ENCODE measurements at regions of chr5 and their contacts with region 1.

Region 1: GRCh38 chr5:169805527-169805934 is 168.5 kb downstream of the DOCK2 start:
- DNase-seq: peak; percentile 94
- ATAC-seq: peak; percentile 90
- H3K4me3 ChIP-seq: peak overlapping the region; percentile 26; the same call in 1 of the 2 replicates
- H3K27ac ChIP-seq: peak overlapping the region; percentile 84
- H3K4me1 ChIP-seq: peaks cover 46% of the 10 kb centered on the region
- H3K27me3 ChIP-seq: no peaks in the 10 kb centered on the region
- CTCF ChIP-seq: no peak
- EP300 ChIP-seq: peak; percentile 87 to 90
- POLR2A ChIP-seq: peak; percentile 72
- RAD21 ChIP-seq: peak; percentile 29; the same call in 1 of the 2 replicates

Region 2: DNA sequence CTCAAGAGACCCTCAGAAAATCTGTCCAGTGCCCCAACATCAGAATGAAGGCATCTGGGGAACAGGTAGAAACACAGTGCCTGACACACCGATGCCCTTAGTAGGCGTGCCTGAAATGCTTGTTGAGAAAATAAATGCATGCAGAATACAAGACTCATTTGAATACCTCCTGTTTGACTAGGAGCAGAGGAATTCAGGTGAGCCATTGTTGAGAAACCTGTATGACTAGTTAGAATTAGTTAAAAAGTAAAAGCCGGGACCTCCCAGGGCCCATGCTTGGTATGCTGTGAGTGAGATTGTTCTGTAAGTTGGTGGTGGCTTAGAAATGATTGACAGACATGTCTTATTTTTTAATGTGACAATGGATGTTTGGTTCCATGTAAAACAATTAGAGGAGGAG is 1459.1 kb before region 1 on chr5:
- CTCF ChIA-PET with region 1: no interaction called
- POLR2A ChIA-PET with region 1: no interaction called
- RAD21 ChIA-PET with region 1: no interaction called
- SMC1A ChIA-PET with region 1: no interaction called
- in situ Hi-C with region 1: no loop called
- intact Hi-C with region 1: no loop called
- DNase-seq: no peak
- ATAC-seq: no peak
- H3K4me3 ChIP-seq: no peak overlapping the region
- H3K27ac ChIP-seq: no peak overlapping the region
- H3K4me1 ChIP-seq: peaks cover 5% of the 10 kb centered on the region
- H3K27me3 ChIP-seq: no peaks in the 10 kb centered on the region
- CTCF ChIP-seq: no peak
- EP300 ChIP-seq: no peak
- POLR2A ChIP-seq: no peak
- RAD21 ChIP-seq: no peak

Region 3: DNA sequence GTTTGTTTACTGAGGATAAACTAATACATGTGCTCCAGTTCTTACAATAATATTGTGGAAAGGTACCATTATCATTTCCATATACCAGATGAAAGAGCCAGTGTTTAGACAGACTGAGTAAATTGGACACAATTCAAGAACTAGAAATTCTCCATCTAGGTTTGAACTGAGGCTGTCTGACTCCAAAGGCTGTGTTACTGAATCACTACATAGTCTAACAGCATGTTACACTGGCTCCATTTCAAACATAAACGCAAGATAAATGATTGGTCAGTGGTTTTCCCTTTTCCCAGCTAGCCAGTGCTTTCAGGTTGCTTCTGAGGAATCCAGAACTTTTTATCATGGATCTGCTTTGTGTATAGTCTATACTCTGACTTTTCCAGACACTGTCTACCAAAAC is 213.9 kb before region 1 on chr5:
- CTCF ChIA-PET with region 1: no interaction called
- POLR2A ChIA-PET with region 1: no interaction called
- RAD21 ChIA-PET with region 1: no interaction called
- SMC1A ChIA-PET with region 1: no interaction called
- in situ Hi-C with region 1: no loop called
- intact Hi-C with region 1: no loop called
- DNase-seq: no peak
- ATAC-seq: no peak
- H3K4me3 ChIP-seq: no peak overlapping the region
- H3K27ac ChIP-seq: no peak overlapping the region
- H3K4me1 ChIP-seq: no peaks in the 10 kb centered on the region
- H3K27me3 ChIP-seq: no peaks in the 10 kb centered on the region
- CTCF ChIP-seq: no peak
- EP300 ChIP-seq: no peak
- POLR2A ChIP-seq: no peak
- RAD21 ChIP-seq: no peak

Region 4: GRCh38 chr5:169701910-169702451 is 103.5 kb before region 1 on chr5:
- CTCF ChIA-PET with region 1: interaction called, 31 read pairs
- POLR2A ChIA-PET with region 1: interaction called, 6 read pairs
- RAD21 ChIA-PET with region 1: interaction called, 78 read pairs
- SMC1A ChIA-PET with region 1: interaction called, 104 read pairs
- in situ Hi-C with region 1: no loop called
- intact Hi-C with region 1: loop called (anchors 1 kb)
- DNase-seq: no peak
- ATAC-seq: no peak
- H3K4me3 ChIP-seq: no peak overlapping the region
- H3K27ac ChIP-seq: peak overlapping the region; percentile 89
- H3K4me1 ChIP-seq: peaks cover 51% of the 10 kb centered on the region
- H3K27me3 ChIP-seq: no peaks in the 10 kb centered on the region
- CTCF ChIP-seq: peak; percentile 30 to 50 (median 39); a peak in 4 of 6 replicates
- EP300 ChIP-seq: no peak
- POLR2A ChIP-seq: no peak
- RAD21 ChIP-seq: peak; percentile 54

Region 5: GRCh38 chr5:169742771-169743296 is 62.7 kb before region 1 on chr5:
- CTCF ChIA-PET with region 1: interaction called, 3 read pairs
- POLR2A ChIA-PET with region 1: interaction called, 4 read pairs
- RAD21 ChIA-PET with region 1: interaction called, 42 read pairs
- SMC1A ChIA-PET with region 1: interaction called, 31 read pairs
- in situ Hi-C with region 1: no loop called
- intact Hi-C with region 1: loop called (anchors 1 kb)
- DNase-seq: no peak
- ATAC-seq: no peak
- H3K4me3 ChIP-seq: no peak overlapping the region
- H3K27ac ChIP-seq: no peak overlapping the region
- H3K4me1 ChIP-seq: peaks cover 9% of the 10 kb centered on the region
- H3K27me3 ChIP-seq: no peaks in the 10 kb centered on the region
- CTCF ChIP-seq: no peak
- EP300 ChIP-seq: no peak
- POLR2A ChIP-seq: no peak
- RAD21 ChIP-seq: no peak

Region 6: DNA sequence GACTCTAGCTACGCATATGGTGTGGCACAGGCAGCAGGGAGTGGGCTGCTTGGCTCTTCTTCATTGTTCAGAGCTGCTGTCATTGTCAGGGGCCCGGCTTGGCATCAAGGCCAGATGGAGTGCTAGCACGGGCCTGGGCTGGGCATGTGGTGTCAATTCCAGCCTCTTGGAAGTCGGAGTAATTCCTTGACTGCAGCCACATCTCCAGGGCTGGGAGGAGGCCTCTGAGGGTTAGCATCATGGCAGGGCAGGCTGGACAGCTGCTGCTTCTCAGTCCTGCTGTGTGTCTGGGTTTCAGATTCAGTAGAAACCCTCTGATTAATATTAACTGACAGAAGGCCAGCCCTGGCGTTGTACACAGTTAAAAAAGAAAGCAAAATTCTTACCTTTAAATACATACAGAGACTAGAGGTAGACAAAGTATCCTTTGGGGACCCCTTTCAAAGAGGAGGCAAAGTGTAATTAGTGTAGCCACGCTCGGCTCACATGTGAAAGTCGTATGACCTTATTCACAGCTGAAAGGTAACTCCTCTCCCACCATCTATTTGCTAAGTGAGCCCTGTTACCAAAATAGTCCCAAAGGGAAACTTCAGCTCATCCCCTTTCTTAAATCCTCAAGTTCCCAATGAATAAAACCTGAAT is 42.0 kb before region 1 on chr5:
- CTCF ChIA-PET with region 1: interaction called, 10 read pairs
- POLR2A ChIA-PET with region 1: interaction called, 16 read pairs
- RAD21 ChIA-PET with region 1: interaction called, 60 read pairs
- SMC1A ChIA-PET with region 1: interaction called, 169 read pairs
- in situ Hi-C with region 1: no loop called
- intact Hi-C with region 1: loop called (anchors 5 kb)
- DNase-seq: peak; percentile 45
- ATAC-seq: peak; percentile 87
- H3K4me3 ChIP-seq: no peak overlapping the region
- H3K27ac ChIP-seq: no peak overlapping the region
- H3K4me1 ChIP-seq: peaks cover 5% of the 10 kb centered on the region; the same call in 1 of the 2 replicates
- H3K27me3 ChIP-seq: no peaks in the 10 kb centered on the region
- CTCF ChIP-seq: no peak
- EP300 ChIP-seq: 0 out of 4 replicates have a peak, but pooled peaks of 1 of the 2 experiments have one; percentile 19
- POLR2A ChIP-seq: no peak
- RAD21 ChIP-seq: no peak

Region 7: GRCh38 chr5:169788166-169788565 is 17.4 kb before region 1 on chr5:
- CTCF ChIA-PET with region 1: interaction called, 5 read pairs
- POLR2A ChIA-PET with region 1: interaction called, 8 read pairs
- RAD21 ChIA-PET with region 1: interaction called, 20 read pairs
- SMC1A ChIA-PET with region 1: interaction called, 368 read pairs
- in situ Hi-C with region 1: no loop called
- intact Hi-C with region 1: no loop called
- DNase-seq: no peak
- ATAC-seq: no peak
- H3K4me3 ChIP-seq: no peak overlapping the region
- H3K27ac ChIP-seq: no peak overlapping the region
- H3K4me1 ChIP-seq: no peaks in the 10 kb centered on the region
- H3K27me3 ChIP-seq: no peaks in the 10 kb centered on the region
- CTCF ChIP-seq: no peak
- EP300 ChIP-seq: no peak
- POLR2A ChIP-seq: no peak
- RAD21 ChIP-seq: no peak

Region 8: DNA sequence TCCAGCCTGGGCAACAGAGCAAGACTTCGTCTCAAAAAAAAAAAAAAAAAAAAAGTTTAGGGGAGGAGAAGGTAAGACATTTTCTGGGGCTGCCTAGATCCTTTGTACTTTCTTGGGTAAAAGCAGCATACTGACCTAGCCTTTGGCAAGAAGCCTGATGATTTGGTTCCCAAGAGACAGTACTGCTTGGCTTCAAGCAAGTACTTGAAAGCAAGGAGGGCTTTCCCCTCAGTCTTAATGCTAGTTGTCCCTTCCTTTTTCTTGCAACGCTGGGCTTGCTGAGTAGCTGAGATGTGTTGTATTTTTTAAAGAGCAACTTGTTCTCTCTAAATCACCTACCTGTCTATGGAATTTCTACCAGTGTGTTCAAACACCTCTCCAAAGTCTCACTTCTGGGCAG is 98.5 kb after region 1 on chr5:
- CTCF ChIA-PET with region 1: interaction called, 3 read pairs
- POLR2A ChIA-PET with region 1: no interaction called
- RAD21 ChIA-PET with region 1: interaction called, 9 read pairs
- SMC1A ChIA-PET with region 1: interaction called, 12 read pairs
- in situ Hi-C with region 1: no loop called
- intact Hi-C with region 1: no loop called
- DNase-seq: peak; percentile 16
- ATAC-seq: peak; percentile 67
- H3K4me3 ChIP-seq: no peak overlapping the region
- H3K27ac ChIP-seq: no peak overlapping the region
- H3K4me1 ChIP-seq: 0 out of 2 replicates have a peak, but pooled peaks cover 3% of the 10 kb centered on the region
- H3K27me3 ChIP-seq: no peaks in the 10 kb centered on the region
- CTCF ChIP-seq: no peak
- EP300 ChIP-seq: no peak
- POLR2A ChIP-seq: no peak
- RAD21 ChIP-seq: no peak

Region 9: GRCh38 chr5:171667341-171668096 is 1862.0 kb after region 1 on chr5:
- CTCF ChIA-PET with region 1: no interaction called
- POLR2A ChIA-PET with region 1: no interaction called
- RAD21 ChIA-PET with region 1: no interaction called
- SMC1A ChIA-PET with region 1: no interaction called
- in situ Hi-C with region 1: no loop called
- intact Hi-C with region 1: no loop called
- DNase-seq: no peak
- ATAC-seq: no peak
- H3K4me3 ChIP-seq: no peak overlapping the region
- H3K27ac ChIP-seq: no peak overlapping the region
- H3K4me1 ChIP-seq: no peaks in the 10 kb centered on the region
- H3K27me3 ChIP-seq: no peaks in the 10 kb centered on the region; a peak in 1 of 4 replicates
- CTCF ChIP-seq: no peak
- EP300 ChIP-seq: no peak
- POLR2A ChIP-seq: no peak
- RAD21 ChIP-seq: no peak